Activated CD8-positive, alpha-beta T cell treated with anti-CD3 and anti-CD28 coated beads for 36 hours (primary cell): ENCODE measurements at regions of chr1 and their contacts with region 1.

Region 1: DNA sequence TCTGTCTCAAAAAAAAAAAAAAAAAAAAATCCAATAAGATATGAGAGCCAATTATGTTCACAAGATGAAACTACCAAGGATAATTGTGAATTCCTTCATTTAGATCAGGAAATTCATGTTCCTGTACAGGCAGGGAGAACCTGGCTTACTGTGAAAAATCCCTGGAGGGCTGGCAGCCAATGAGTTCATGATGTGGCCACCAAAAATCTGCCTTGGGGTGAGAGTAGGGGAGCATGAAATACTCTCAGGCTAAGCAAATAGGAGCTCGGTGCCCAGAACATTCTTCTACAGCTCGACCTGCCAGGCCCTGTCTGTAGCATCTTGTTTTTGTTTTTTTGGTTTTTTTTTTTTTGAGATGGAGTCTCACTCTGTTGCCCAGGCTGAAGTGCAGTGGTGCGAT is 50.1 kb downstream of the PIK3CD start:
- DNase-seq: no peak
- ATAC-seq: no peak
- H3K4me3 Mint-ChIP-seq: no peak overlapping the region
- H3K27ac Mint-ChIP-seq: no peak overlapping the region
- H3K4me1 Mint-ChIP-seq: peaks cover 68% of the 10 kb centered on the region
- H3K27me3 Mint-ChIP-seq: no peaks in the 10 kb centered on the region
- CTCF ChIP-seq: no peak

Region 2: DNA sequence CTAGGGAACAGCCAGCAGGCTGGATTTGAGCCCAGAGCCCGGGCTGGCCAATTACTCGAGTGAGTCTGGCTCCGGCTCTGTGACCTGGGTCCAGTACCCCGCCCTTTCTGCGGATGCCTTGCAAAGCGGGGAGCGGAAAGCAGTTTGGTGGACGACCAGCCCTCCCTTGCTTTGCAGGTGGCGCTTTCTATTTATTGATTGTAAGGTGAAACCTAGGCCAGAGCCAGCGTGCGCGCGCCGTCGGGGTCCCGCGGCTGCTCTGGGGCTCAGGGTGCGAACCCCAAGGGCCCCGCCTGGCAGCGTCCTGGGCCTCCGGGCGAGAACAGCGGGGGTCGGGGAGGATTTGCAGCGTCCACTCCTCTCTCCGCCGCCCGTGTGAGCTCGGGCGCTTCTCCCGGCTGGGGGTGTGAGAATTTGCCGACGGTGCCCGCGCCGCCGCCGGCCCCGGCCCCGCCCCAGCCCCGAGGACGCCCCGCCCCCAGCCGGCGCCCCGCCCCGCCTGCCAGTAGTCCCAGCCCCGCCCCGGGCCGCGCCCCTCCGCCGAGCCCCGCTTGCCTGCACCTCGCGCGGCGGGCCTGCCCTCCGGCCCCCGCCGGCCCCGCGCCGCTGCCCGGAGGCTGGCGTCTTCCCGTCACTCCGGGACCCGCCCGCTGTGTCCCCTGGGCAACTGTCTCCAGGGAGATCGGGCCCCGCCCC is 12.5 kb before region 1 on chr1:
- CTCF ChIA-PET with region 1: interaction called, 13 read pairs
- POLR2A ChIA-PET with region 1: interaction called, 11 read pairs
- intact Hi-C with region 1: no loop called
- DNase-seq: peak; percentile 89
- ATAC-seq: peak; percentile 74
- H3K4me3 Mint-ChIP-seq: peak overlapping the region; percentile 77
- H3K27ac Mint-ChIP-seq: peak overlapping the region; percentile 71
- H3K4me1 Mint-ChIP-seq: peaks cover 70% of the 10 kb centered on the region
- H3K27me3 Mint-ChIP-seq: no peaks in the 10 kb centered on the region
- CTCF ChIP-seq: no peak

Region 3: GRCh38 chr1:9714257-9714718 is 12.6 kb after region 1 on chr1:
- CTCF ChIA-PET with region 1: interaction called, 18 read pairs
- POLR2A ChIA-PET with region 1: interaction called, 19 read pairs
- intact Hi-C with region 1: no loop called
- DNase-seq: peak; percentile 66
- ATAC-seq: peak; percentile 17
- H3K4me3 Mint-ChIP-seq: peak overlapping the region; percentile 94
- H3K27ac Mint-ChIP-seq: peak overlapping the region; percentile 85
- H3K4me1 Mint-ChIP-seq: peaks cover 65% of the 10 kb centered on the region
- H3K27me3 Mint-ChIP-seq: no peaks in the 10 kb centered on the region
- CTCF ChIP-seq: no peak

Region 4: DNA sequence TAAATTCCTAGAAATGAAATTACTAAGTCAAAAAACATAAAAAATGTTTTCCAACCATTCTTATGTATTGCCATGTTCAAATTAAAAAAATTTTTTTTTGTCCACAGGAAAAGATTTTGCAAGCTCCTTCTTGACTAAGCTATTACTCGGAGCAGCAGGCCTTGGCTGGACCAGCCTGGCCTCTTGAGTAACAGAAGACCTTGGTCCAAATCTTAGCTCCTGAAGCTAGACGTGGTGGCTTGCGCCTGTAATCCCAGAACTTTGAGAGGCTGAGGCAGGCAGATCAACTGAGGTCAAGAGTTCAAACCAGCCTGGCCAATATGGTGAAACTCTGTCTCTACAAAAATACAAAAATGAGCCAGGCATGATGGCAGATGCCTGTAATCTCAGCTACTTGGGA is 44.5 kb after region 1 on chr1:
- CTCF ChIA-PET with region 1: no interaction called
- POLR2A ChIA-PET with region 1: no interaction called
- intact Hi-C with region 1: no loop called
- DNase-seq: no peak
- ATAC-seq: no peak
- H3K4me3 Mint-ChIP-seq: no peak overlapping the region
- H3K27ac Mint-ChIP-seq: no peak overlapping the region
- H3K4me1 Mint-ChIP-seq: no peaks in the 10 kb centered on the region
- H3K27me3 Mint-ChIP-seq: no peaks in the 10 kb centered on the region
- CTCF ChIP-seq: no peak